HEK293T (cell line): ENCODE measurements at regions of chr5 and their contacts with region 1.

Region 1: DNA sequence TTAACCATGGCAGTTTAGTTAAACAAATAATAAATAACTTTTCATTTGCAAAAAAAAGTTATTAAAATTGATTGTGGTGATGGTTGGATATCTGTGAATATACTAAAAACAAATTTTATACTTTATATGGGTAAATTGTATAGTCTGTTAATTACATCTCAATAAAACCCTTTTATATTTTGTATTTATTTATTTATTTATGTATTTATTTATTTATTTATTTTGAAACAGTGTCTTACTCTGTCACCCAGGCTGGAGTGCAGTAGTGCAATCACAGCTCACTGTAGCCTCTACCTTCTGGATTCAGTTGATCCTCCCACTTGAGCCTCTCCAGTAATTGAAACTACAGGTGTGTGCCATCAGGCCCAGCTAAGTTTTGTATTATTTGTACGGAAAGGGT is 52.4 kb downstream of the OTP start:
- DNase-seq: no peak

Region 2: GRCh38 chr5:77669677-77670076 is 83.6 kb after region 1 on chr5:
- CTCF ChIA-PET with region 1: interaction called, 12 read pairs
- POLR2A ChIA-PET with region 1: no interaction called
- DNase-seq: no peak